ENCODE measurements at regions of chrX and their contacts with region 1.

Region 1: GRCh38 chrX:46758906-46759644 is at the start of gene SLC9A7:
- DNase-seq: peak; percentile 59
- ATAC-seq: peak; percentile 90
- H3K4me3 ChIP-seq: peak within 1 kb of the TSS; percentile 54 to 74
- H3K27ac ChIP-seq: peak within 1 kb of the TSS; percentile 83
- H3K4me1 ChIP-seq: peaks cover 11 to 20% of the 10 kb centered on the region in 2 experiments
- H3K27me3 ChIP-seq: no peaks in the 10 kb centered on the region
- CTCF ChIP-seq: peak; percentile 63 to 69 (median 65)
- POLR2A ChIP-seq: peak; percentile 54
- RAD21 ChIP-seq: peak; percentile 91
- total RNA-seq, gene SLC9A7: 18.6 TPM

Region 2: DNA sequence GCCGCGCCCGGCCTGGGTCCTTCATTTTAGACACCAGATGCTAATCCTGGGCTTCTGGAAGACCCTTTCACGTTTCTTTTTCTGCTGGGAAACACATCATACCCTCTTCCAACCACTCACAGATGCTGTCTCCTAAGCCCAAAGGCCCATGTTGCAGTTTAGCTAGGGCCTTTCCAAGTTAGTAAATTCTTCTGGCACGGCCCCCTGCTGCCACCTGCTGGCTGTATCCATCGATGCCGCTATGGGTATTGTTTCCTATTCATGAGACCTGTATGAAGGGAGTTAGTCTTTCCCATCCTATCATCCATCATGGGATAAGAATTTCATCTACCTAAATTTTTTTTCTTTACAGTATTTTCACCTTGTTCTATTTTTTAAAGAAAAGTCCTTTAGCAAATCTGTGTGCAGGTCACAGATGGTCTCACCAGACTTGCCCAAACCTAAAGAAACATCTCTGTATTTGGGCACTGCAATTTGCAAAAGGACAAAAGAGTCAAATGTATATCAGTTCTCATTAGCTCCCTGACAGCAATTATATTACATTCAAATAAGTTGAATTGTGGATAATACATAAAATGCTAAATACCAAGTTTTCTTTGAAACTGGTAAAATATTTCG is 37.6 kb after region 1 on chrX:
- CTCF ChIA-PET with region 1: interaction called, 5 read pairs
- POLR2A ChIA-PET with region 1: interaction called, 3 read pairs
- RAD21 ChIA-PET with region 1: interaction called, 3 to 5 read pairs
- intact Hi-C with region 1: loop called (anchors 1 kb)
- DNase-seq: peak; percentile 36
- ATAC-seq: peak; percentile 79
- H3K4me3 ChIP-seq: no peak overlapping the region
- H3K27ac ChIP-seq: no peak overlapping the region
- H3K4me1 ChIP-seq: peaks cover under 1 to 26% of the 10 kb centered on the region in 2 experiments; a peak in 3 of 4 replicates
- H3K27me3 ChIP-seq: no peaks in the 10 kb centered on the region
- CTCF ChIP-seq: peak; percentile 70 to 77 (median 73); a peak in 5 of 6 replicates
- POLR2A ChIP-seq: no peak
- RAD21 ChIP-seq: peak; percentile 91

Region 3: DNA sequence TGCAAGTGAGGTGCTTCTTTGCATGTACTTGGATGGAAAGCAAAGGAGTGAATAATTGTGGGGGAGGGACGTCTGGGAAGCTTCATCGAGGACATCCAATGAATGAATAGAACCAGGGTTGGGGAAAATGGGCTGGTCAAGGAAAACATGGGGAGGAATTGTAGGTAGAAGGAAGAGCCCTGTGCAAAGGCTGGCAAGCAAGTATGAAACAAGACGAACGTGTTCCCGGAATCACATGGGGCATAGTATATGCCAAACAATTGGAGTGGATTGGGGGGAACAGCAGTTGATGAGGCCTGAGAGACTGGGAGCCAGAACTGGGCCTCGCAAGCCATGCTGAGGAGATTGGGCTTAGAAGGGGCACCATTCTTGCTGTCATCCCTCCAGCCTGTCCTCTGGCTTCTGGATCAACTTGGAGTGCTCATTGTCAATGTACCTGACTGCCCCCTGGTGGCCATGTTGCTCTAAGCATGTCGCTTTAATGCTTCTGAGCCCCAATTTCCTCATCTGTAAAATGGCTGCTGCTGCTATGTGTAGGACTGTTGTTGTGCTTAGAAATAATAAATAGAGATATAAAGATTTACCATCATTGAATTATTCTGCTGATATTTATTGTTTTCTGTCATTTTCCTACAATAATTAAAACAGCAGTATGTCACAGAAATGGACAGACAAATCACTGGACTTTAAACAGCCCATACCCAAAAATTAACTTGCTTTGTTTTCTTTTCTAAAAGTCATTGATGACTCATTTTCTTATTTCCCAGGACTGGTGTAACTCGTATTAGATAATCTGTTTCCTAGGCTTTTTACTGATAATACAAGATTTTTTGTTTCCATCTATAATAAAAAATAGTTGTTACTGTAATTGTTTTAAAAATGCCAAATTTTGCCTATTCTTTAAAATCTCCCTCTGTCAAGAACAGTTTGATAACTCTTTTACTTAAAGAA is 219.5 kb after region 1 on chrX:
- CTCF ChIA-PET with region 1: no interaction called
- POLR2A ChIA-PET with region 1: no interaction called
- RAD21 ChIA-PET with region 1: no interaction called
- intact Hi-C with region 1: loop called (anchors 1 kb)
- DNase-seq: peak; percentile 68
- ATAC-seq: peak; percentile 94
- H3K4me3 ChIP-seq: peak overlapping the region in 1 of 2 experiments; percentile 37; a peak in 1 of 4 replicates
- H3K27ac ChIP-seq: peak overlapping the region; percentile 76; the same call in 1 of the 2 replicates
- H3K4me1 ChIP-seq: peaks cover 7 to 16% of the 10 kb centered on the region in 2 experiments
- H3K27me3 ChIP-seq: no peaks in the 10 kb centered on the region
- CTCF ChIP-seq: peak; percentile 50 to 63 (median 59); a peak in 5 of 6 replicates
- POLR2A ChIP-seq: no peak
- RAD21 ChIP-seq: peak; percentile 48

Region 4: DNA sequence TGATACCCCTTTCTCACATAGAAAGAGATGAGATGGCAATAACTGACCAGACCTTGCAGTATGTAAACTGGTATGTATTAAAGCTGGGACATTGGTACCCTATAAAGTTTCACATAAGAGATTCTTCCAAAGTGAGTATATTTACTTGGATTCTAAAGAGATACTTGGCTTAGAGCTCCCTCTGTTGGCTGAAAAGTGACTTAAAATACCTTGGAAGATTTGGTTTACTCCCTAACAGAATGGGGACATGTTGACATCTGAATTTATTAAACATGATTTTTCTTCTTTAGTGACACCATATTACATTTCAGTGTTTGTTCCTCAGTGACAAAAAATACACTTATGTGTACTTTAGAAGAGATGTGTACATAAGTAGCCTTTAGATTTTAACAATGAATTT is 271.3 kb after region 1 on chrX:
- CTCF ChIA-PET with region 1: interaction called, 3 read pairs
- POLR2A ChIA-PET with region 1: no interaction called
- RAD21 ChIA-PET with region 1: interaction called in 1 of 2 experiments, 3 read pairs
- intact Hi-C with region 1: loop called (anchors 1 kb)
- DNase-seq: peak; percentile 51
- ATAC-seq: 0 out of 2 replicates have a peak, but pooled peaks have one; percentile 38
- H3K4me3 ChIP-seq: no peak overlapping the region
- H3K27ac ChIP-seq: no peak overlapping the region
- H3K4me1 ChIP-seq: no peaks in the 10 kb centered on the region
- H3K27me3 ChIP-seq: no peaks in the 10 kb centered on the region
- CTCF ChIP-seq: peak; percentile 32 to 58 (median 53); a peak in 4 of 6 replicates
- POLR2A ChIP-seq: no peak
- RAD21 ChIP-seq: peak; percentile 68

Region 5: DNA sequence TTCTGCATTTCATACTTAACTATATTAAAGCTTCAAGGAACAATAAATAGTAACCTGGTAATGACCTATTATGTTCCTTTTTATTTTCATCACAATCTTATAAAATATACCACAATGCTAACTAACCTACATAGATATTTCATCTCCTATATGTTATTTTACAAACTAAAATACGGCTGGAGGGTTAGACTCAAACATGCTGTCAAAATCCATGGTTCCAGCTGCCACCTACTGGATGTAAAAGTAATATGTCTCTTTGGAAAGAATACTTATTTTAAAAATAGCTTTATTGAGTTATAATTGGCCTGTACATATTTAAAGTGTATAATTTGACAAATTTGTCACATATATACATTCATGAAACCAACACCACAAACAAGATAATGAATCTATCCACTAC is 334.2 kb after region 1 on chrX:
- CTCF ChIA-PET with region 1: no interaction called
- POLR2A ChIA-PET with region 1: no interaction called
- RAD21 ChIA-PET with region 1: no interaction called
- intact Hi-C with region 1: loop called (anchors 10 kb)
- DNase-seq: peak; percentile 10
- ATAC-seq: peak; percentile 42; the same call in 1 of the 2 replicates
- H3K4me3 ChIP-seq: no peak overlapping the region
- H3K27ac ChIP-seq: no peak overlapping the region
- H3K4me1 ChIP-seq: no peaks in the 10 kb centered on the region
- H3K27me3 ChIP-seq: no peaks in the 10 kb centered on the region
- CTCF ChIP-seq: peak; percentile 30 to 55 (median 49); a peak in 4 of 6 replicates
- POLR2A ChIP-seq: no peak
- RAD21 ChIP-seq: peak; percentile 63